ENCODE measurements at regions of chr10 and their contacts with region 1.

Region 1: DNA sequence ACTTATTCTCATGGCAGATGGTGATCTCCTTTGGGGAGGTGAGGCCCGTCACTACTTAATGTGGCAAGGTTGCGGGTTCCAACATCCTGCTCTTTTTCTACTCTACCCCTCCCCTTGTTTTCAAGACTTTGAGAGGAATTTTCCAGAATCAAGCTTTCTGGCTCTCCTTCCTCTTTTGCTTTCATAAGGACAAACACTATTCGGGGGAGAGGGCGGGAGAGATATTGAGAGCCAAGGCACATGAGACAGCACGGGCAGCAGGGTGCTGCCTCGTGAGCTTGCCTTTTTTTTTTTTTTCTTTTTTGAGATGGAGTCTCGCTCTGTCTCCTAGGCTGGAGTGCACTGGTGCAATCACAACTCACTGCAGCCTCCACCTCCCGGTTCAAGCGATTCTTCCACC is 6.9 kb upstream of the PFKFB3 start:
- H3K4me3 Mint-ChIP-seq: peak overlapping the region; percentile 26
- H3K27ac Mint-ChIP-seq: peak overlapping the region; percentile 82
- H3K4me1 Mint-ChIP-seq: peaks cover 85% of the 10 kb centered on the region
- H3K27me3 Mint-ChIP-seq: peaks cover 1% of the 10 kb centered on the region

Region 2: GRCh38 chr10:6163364-6164270 is 32.2 kb before region 1 on chr10:
- intact Hi-C with region 1: loop called (anchors 2 kb)
- H3K4me3 Mint-ChIP-seq: peak overlapping the region; percentile 97
- H3K27ac Mint-ChIP-seq: peak overlapping the region; percentile 99
- H3K4me1 Mint-ChIP-seq: peaks cover 65% of the 10 kb centered on the region
- H3K27me3 Mint-ChIP-seq: no peaks in the 10 kb centered on the region